ENCODE measurements at regions of chr2 and their contacts with region 1.

Region 1: DNA sequence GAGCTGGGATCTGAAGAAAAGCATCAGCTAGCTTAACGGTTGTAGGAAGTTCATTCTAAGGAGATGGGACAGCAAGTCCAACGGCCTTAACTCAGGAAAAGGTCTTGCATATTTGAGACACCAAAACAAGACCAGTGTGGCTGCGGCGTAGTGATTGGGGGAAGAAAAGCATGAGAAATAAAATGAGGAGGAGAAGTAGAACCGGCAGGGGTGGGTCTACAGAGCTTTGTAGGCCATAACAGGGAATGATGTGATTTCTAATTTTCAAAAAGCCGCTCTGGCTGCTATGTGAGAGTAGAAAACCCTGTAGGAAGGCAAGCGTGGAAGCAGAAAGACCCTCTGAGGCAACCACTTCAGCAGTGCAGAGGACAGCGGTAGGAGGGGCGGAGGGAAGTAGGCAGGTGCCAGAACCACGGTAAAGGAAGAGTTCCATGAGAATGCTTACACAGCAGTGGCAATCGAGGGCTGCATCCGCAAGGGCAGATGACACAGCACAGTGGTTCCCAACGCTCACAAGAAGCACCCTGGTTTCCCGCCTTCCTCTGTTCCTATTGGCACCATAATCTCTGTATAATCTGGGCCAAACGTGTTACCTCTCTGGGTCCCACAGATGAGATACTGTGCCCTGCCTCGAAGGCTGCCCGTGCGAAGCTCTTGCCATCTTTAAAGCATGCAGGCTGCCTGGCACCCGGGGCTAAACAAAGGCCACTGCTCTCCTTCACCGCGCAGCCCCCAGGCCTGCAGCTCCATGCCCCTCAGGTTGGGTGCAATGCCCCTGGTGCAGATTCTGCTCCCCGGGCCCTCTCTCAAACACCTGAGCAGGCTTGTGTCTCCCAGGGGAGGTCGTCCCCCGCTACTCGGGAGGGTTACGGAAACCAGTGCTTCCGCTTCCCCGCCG is 791 bp downstream of the ANKRD39 start:
- DNase-seq: no peak
- ATAC-seq: peak; percentile 5
- H3K4me3 ChIP-seq: peak overlapping the region; percentile 99
- H3K27ac ChIP-seq: peak overlapping the region; percentile 86
- H3K4me1 ChIP-seq: peaks cover 3% of the 10 kb centered on the region; the same call in 1 of the 2 replicates
- H3K27me3 ChIP-seq: no peaks in the 10 kb centered on the region
- CTCF ChIP-seq: no peak
- EP300 ChIP-seq: no peak
- POLR2A ChIP-seq: no peak
- RAD21 ChIP-seq: no peak

Region 2: GRCh38 chr2:96594691-96595152 is 262.3 kb before region 1 on chr2:
- CTCF ChIA-PET with region 1: no interaction called
- POLR2A ChIA-PET with region 1: no interaction called
- RAD21 ChIA-PET with region 1: no interaction called
- SMC1A ChIA-PET with region 1: no interaction called
- in situ Hi-C with region 1: no loop called
- intact Hi-C with region 1: no loop called
- DNase-seq: no peak
- ATAC-seq: no peak
- H3K4me3 ChIP-seq: no peak overlapping the region
- H3K27ac ChIP-seq: no peak overlapping the region
- H3K4me1 ChIP-seq: no peaks in the 10 kb centered on the region
- H3K27me3 ChIP-seq: no peaks in the 10 kb centered on the region
- CTCF ChIP-seq: no peak
- EP300 ChIP-seq: no peak
- POLR2A ChIP-seq: no peak
- RAD21 ChIP-seq: no peak

Region 3: DNA sequence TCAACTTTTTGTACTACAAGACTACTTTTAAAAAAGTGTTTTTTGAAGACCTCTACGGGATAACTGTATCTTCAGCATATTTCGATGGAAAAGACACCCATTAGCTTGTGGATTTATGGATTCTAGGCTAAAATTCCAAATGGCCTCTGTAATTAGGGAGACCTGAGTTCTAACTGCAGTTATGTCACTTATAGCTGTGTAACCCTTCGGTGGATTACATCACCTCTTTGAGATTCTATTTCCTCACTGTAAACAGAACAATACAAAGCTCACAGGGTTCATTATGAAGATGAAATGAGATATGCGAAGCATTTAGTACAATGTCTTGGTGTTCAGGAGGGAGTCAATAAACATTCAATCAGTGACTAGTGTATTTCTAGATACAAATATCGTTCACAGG is 141.4 kb before region 1 on chr2:
- CTCF ChIA-PET with region 1: no interaction called
- POLR2A ChIA-PET with region 1: no interaction called
- RAD21 ChIA-PET with region 1: no interaction called
- SMC1A ChIA-PET with region 1: no interaction called
- in situ Hi-C with region 1: no loop called
- intact Hi-C with region 1: no loop called
- DNase-seq: no peak
- ATAC-seq: no peak
- H3K4me3 ChIP-seq: no peak overlapping the region
- H3K27ac ChIP-seq: no peak overlapping the region
- H3K4me1 ChIP-seq: no peaks in the 10 kb centered on the region
- H3K27me3 ChIP-seq: no peaks in the 10 kb centered on the region
- CTCF ChIP-seq: no peak
- EP300 ChIP-seq: no peak
- POLR2A ChIP-seq: no peak
- RAD21 ChIP-seq: no peak

Region 4: GRCh38 chr2:96773922-96774321 is 83.1 kb before region 1 on chr2:
- CTCF ChIA-PET with region 1: interaction called, 10 read pairs
- POLR2A ChIA-PET with region 1: no interaction called
- RAD21 ChIA-PET with region 1: interaction called, 10 read pairs
- SMC1A ChIA-PET with region 1: no interaction called
- in situ Hi-C with region 1: no loop called
- intact Hi-C with region 1: no loop called
- DNase-seq: no peak
- ATAC-seq: peak; percentile 66
- H3K4me3 ChIP-seq: peak overlapping the region; percentile 54
- H3K27ac ChIP-seq: peak overlapping the region; percentile 71
- H3K4me1 ChIP-seq: peaks cover 52% of the 10 kb centered on the region
- H3K27me3 ChIP-seq: no peaks in the 10 kb centered on the region
- CTCF ChIP-seq: no peak; a peak in 1 of 6 replicates
- EP300 ChIP-seq: no peak
- POLR2A ChIP-seq: peak; percentile 25; the same call in 1 of the 2 replicates
- RAD21 ChIP-seq: no peak

Region 5: DNA sequence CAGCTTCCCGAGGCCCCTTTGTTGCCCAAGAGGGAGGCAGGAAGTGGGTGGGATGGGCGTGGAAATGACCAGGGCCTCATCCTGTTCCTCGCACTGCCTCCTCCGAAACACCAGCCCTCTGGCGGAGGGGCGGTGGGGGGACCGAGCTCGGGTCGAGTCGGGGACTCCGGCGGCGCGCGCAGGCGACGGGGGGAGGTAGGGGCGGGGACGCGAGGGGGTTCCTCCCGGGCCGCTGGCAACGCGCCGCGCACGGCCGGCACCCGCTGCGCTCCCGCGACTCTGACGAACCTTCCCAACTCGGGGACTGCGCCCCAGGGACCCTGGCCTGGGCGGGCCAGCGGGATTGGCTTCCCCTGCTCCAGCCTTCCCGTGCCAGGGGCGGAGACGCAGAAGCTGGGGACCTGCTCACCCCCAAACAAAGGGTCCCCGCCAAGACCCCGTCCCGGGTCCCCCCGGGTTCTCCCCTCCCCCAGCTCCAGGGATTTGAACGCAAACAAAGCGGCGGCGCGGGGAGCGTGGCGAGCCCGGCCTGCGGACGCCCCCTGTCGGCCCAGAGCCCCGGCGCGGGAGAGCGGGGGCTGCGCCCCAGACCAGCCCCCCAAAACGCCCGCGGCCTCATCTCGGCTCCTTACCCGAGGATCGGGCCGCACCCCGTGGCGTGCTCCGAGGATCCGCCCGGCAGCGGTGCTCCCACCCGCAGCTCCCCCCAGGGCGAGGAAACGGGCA is 11.7 kb after region 1 on chr2:
- CTCF ChIA-PET with region 1: interaction called, 31 read pairs
- POLR2A ChIA-PET with region 1: interaction called, 30 read pairs
- RAD21 ChIA-PET with region 1: interaction called, 39 read pairs
- SMC1A ChIA-PET with region 1: interaction called, 14 read pairs
- in situ Hi-C with region 1: no loop called
- intact Hi-C with region 1: no loop called
- DNase-seq: peak; percentile 33
- ATAC-seq: peak; percentile 78
- H3K4me3 ChIP-seq: peak overlapping the region; percentile 95
- H3K27ac ChIP-seq: peak overlapping the region; percentile 86
- H3K4me1 ChIP-seq: peaks cover 23% of the 10 kb centered on the region
- H3K27me3 ChIP-seq: no peaks in the 10 kb centered on the region; a peak in 1 of 4 replicates
- CTCF ChIP-seq: peak; percentile 59 to 62 (median 60); a peak in 5 of 6 replicates
- EP300 ChIP-seq: no peak
- POLR2A ChIP-seq: peak; percentile 72
- RAD21 ChIP-seq: peak; percentile 38

Region 6: GRCh38 chr2:96951093-96951654 is 94.1 kb after region 1 on chr2:
- CTCF ChIA-PET with region 1: interaction called, 238 read pairs
- POLR2A ChIA-PET with region 1: interaction called, 10 read pairs
- RAD21 ChIA-PET with region 1: interaction called, 148 read pairs
- SMC1A ChIA-PET with region 1: interaction called, 99 read pairs
- in situ Hi-C with region 1: loop called (anchors 5 kb)
- intact Hi-C with region 1: loop called (anchors 1 kb)
- DNase-seq: no peak
- ATAC-seq: peak; percentile 91
- H3K4me3 ChIP-seq: no peak overlapping the region
- H3K27ac ChIP-seq: no peak overlapping the region
- H3K4me1 ChIP-seq: peaks cover 11% of the 10 kb centered on the region
- H3K27me3 ChIP-seq: no peaks in the 10 kb centered on the region; a peak in 1 of 4 replicates
- CTCF ChIP-seq: peak; percentile 85 to 96 (median 92)
- EP300 ChIP-seq: no peak
- POLR2A ChIP-seq: no peak
- RAD21 ChIP-seq: peak; percentile 77

Measured in GM12878 (cell line).